Right ventricle myocardium inferior (tissue), 1 donor: ENCODE measurements at regions of chr5 and their contacts with region 1.

Region 1: DNA sequence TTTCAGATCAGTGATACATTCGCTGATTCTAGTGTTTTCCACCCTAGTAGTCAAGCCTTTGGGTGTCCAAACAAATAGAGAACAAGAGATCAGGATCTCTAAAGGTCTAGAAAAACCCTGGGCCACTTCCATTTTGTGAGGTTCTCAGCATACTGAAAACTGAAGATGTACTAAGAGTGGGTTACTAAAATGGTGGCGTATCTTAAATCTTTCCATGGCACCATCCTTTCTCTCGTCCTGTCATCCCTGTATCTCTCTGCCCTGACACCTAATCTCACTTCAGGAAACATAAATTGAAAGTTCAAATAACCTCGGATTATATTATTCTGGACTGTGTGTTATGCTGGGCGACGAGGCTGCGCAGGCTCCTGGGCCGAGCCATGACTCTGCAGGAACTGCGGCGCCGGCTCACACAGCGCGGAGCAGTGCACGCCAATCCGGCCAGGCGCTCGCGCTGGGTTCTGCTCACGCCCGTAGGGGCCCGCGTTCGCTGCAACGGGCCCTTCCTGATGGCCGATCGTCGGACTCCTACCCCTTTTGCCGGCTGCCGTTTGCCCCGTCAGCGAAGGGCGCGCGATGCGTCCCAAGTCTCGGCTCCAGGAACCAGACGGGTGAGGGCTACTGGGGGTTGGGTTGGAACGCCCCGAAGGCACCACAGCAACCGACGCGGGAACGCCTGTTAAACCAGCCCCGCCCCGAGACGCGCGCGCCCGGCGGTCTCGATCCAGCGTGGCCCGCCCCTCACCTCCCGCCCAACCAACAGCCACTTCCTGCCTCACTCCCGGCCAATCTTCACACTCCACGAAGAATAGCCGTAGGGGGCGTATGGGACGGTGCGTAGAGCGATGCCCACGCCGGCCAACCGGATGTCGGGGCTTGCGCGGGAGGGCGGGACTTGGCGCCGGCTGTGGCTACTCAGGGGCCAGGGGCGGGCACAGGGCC is 503 bp upstream of the CANX start:
- DNase-seq: peak; percentile 99
- ATAC-seq: peak; percentile 97

Region 2: GRCh38 chr5:179623003-179623880 is 75.0 kb before region 1 on chr5 and contains the start of gene HNRNPH1:
- intact Hi-C with region 1: loop called (anchors 2 kb)
- DNase-seq: peak; percentile 98
- ATAC-seq: peak; percentile 91
- total RNA-seq, gene HNRNPH1: 218 TPM

Region 3: GRCh38 chr5:179678223-179679013 is 19.8 kb before region 1 on chr5:
- intact Hi-C with region 1: loop called (anchors 1 kb)
- DNase-seq: peak; percentile 99
- ATAC-seq: peak; percentile 98

Region 4: GRCh38 chr5:179732417-179732917 is 34.2 kb after region 1 on chr5 and contains the start of gene MAML1:
- intact Hi-C with region 1: loop called (anchors 1 kb)
- DNase-seq: peak; percentile 100
- ATAC-seq: peak; percentile 99
- total RNA-seq, gene MAML1: 11.1 TPM

Region 5: DNA sequence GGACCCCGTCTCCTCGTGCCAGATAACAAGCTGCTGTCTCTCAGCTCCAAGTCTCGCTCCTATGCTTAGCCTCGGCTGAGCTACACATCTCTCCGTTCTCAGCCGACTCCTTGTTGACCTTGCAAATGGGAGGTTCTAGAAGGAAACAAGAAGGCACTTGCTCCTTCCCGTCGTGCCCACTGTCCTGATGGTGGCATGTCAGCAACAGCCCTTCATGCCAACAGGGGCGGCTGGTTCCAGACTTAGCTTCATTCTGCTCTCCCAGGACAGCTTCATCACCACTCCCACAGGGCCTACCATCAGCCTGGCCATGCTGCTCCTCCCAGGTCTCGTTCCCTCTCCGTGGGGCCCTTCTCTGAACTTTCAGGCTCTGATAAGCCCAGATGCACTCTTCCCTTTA is 523.8 kb after region 1 on chr5:
- intact Hi-C with region 1: no loop called
- DNase-seq: no peak
- ATAC-seq: no peak